HCT116 (cell line): ENCODE measurements at regions of chr15 and their contacts with region 1.

Region 1: GRCh38 chr15:29322415-29322814 is 52.8 kb upstream of the NSMCE3 start:
- DNase-seq: no peak
- ATAC-seq: no peak
- H3K4me3 ChIP-seq: no peak overlapping the region
- H3K27ac ChIP-seq: no peak overlapping the region
- H3K4me1 ChIP-seq: no peaks in the 10 kb centered on the region
- H3K27me3 ChIP-seq: peaks cover 14% of the 10 kb centered on the region; the same call in 1 of the 2 replicates
- CTCF ChIP-seq: no peak
- POLR2A ChIP-seq: no peak
- RAD21 ChIP-seq: no peak

Region 2: GRCh38 chr15:29337156-29337959 is 14.9 kb after region 1 on chr15:
- CTCF ChIA-PET with region 1: no interaction called
- POLR2A ChIA-PET with region 1: no interaction called
- RAD21 ChIA-PET with region 1: no interaction called
- intact Hi-C with region 1: no loop called
- DNase-seq: no peak
- ATAC-seq: no peak
- H3K4me3 ChIP-seq: no peak overlapping the region
- H3K27ac ChIP-seq: no peak overlapping the region
- H3K4me1 ChIP-seq: no peaks in the 10 kb centered on the region
- H3K27me3 ChIP-seq: peaks cover 24% of the 10 kb centered on the region; the same call in 1 of the 2 replicates
- CTCF ChIP-seq: no peak
- POLR2A ChIP-seq: no peak
- RAD21 ChIP-seq: no peak

Region 3: DNA sequence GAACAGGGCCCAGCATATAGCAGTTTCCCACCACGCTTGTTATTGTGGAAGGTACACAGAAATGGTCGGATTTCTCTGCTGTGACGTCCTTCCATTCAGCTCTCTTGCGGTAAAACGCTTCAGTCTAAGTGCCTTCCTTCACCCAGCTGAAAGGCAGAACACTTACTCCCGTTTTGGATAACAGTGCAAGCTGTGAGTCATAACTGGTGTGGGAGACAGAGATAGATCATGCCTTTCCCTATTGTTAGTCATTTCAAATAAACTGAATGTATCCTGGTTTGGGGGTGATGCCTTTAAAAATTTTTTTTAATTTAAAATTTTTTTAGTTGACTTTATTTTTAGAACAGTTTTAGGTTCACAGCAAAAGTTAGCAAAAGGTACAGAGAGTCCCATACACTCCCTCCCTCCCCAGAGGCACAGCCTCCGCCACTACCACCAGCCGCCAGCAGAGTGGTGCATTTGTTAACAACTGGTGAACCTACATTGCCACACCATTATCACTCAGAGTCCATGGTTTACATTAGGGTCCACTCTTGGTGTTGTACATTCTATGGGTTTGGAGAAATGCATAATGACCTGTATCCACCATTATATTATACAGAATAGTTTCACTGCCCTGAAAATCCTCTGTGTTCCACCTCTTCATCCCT is 42.1 kb after region 1 on chr15:
- CTCF ChIA-PET with region 1: no interaction called
- POLR2A ChIA-PET with region 1: no interaction called
- RAD21 ChIA-PET with region 1: no interaction called
- intact Hi-C with region 1: no loop called
- DNase-seq: no peak
- ATAC-seq: peak; percentile 95
- H3K4me3 ChIP-seq: no peak overlapping the region
- H3K27ac ChIP-seq: no peak overlapping the region
- H3K4me1 ChIP-seq: no peaks in the 10 kb centered on the region
- H3K27me3 ChIP-seq: peaks cover 42% of the 10 kb centered on the region
- CTCF ChIP-seq: peak in 2 of 3 experiments; percentile 44 to 53; a peak in 4 of 6 replicates
- POLR2A ChIP-seq: no peak
- RAD21 ChIP-seq: no peak

Region 4: DNA sequence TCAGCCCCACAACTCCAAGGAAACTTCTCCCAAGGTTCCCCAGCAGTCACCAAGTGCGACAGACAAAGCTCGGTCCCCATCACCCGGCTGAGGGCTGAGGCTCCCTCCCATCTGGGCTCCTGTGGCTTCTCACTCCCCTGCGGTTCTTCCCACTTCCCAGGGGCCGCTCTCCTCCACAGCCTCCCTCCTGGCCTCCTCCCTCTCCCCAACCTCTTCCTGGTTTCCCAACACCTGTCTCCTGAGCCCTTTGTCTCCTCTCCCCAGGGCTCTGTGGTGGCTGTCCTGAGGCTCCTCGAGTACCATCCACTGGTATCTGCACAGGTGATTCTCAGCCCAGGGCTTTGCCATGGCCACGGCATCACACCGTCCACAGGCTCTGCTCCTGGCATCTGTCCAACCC is 60.4 kb after region 1 on chr15:
- CTCF ChIA-PET with region 1: no interaction called
- POLR2A ChIA-PET with region 1: no interaction called
- RAD21 ChIA-PET with region 1: no interaction called
- intact Hi-C with region 1: loop called (anchors 10 kb)
- DNase-seq: no peak
- ATAC-seq: no peak
- H3K4me3 ChIP-seq: no peak overlapping the region
- H3K27ac ChIP-seq: no peak overlapping the region
- H3K4me1 ChIP-seq: no peaks in the 10 kb centered on the region
- H3K27me3 ChIP-seq: peaks cover 3% of the 10 kb centered on the region
- CTCF ChIP-seq: no peak
- POLR2A ChIP-seq: no peak
- RAD21 ChIP-seq: no peak

Region 5: GRCh38 chr15:29835301-29835700 is 512.9 kb after region 1 on chr15:
- CTCF ChIA-PET with region 1: no interaction called
- POLR2A ChIA-PET with region 1: no interaction called
- RAD21 ChIA-PET with region 1: no interaction called
- intact Hi-C with region 1: no loop called
- DNase-seq: no peak
- ATAC-seq: no peak
- H3K4me3 ChIP-seq: no peak overlapping the region
- H3K27ac ChIP-seq: no peak overlapping the region
- H3K4me1 ChIP-seq: no peaks in the 10 kb centered on the region; a peak in 1 of 4 replicates
- H3K27me3 ChIP-seq: no peaks in the 10 kb centered on the region
- CTCF ChIP-seq: no peak
- POLR2A ChIP-seq: no peak
- RAD21 ChIP-seq: no peak